Esophagus squamous epithelium (tissue), 5 donors: ENCODE measurements at regions of chr6 and their contacts with region 1.

Region 1: GRCh38 chr6:151390276-151391032 is 905 bp downstream of the ZBTB2 start:
- DNase-seq: peak; percentile 88
- H3K4me3 ChIP-seq: peak overlapping the region; percentile 85 to 99 (median 90)
- H3K27ac ChIP-seq: peak overlapping the region; percentile 98 to 100 (median 99)
- H3K4me1 ChIP-seq: peaks cover 20 to 59% (median 24%) of the 10 kb centered on the region in 3 donors
- H3K27me3 ChIP-seq: no peaks in the 10 kb centered on the region
- CTCF ChIP-seq: no peak
- POLR2A ChIP-seq: peak in 2 of 4 donors; percentile 42 to 64

Region 2: DNA sequence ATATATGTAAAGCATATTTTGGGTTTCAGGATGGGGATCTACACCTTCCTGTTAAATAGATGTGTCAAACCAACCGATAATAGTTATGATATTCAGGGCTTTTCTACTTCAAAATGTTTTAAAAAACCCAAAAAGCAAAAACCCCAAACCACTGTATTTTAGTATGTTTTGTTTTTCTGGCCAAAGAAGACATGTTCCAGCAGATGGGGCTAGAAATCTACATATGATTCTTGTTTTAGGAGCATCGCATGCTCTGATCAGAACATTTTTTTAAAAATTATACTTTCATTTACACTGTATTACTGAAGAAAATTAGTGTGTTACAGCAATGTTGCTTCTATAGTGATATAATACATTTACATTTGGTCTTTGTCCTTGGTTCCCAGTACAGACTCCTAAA is 50.5 kb after region 1 on chr6:
- intact Hi-C with region 1: loop called (anchors 10 kb)
- DNase-seq: no peak
- H3K4me3 ChIP-seq: no peak overlapping the region
- H3K27ac ChIP-seq: peak overlapping the region in 2 of 4 donors; percentile 15 to 30
- H3K4me1 ChIP-seq: peaks cover 0 to 41% (median 11%) of the 10 kb centered on the region in 3 donors
- H3K27me3 ChIP-seq: no peaks in the 10 kb centered on the region
- CTCF ChIP-seq: peak in 3 of 6 experiments; percentile 27 to 31 (median 31)
- POLR2A ChIP-seq: no peak